ENCODE measurements at regions of chr10 and their contacts with region 1.

Region 1: GRCh38 chr10:94439275-94439861 is 37.0 kb downstream of the TBC1D12 start:
- DNase-seq: no peak
- H3K4me3 ChIP-seq: no peak overlapping the region
- H3K27ac ChIP-seq: no peak overlapping the region
- H3K27me3 ChIP-seq: no peaks in the 10 kb centered on the region
- CTCF ChIP-seq: 0 out of 2 replicates have a peak, but pooled peaks have one; percentile 30

Region 2: GRCh38 chr10:94076321-94076841 is 363.0 kb before region 1 on chr10:
- CTCF ChIA-PET with region 1: interaction called, 25 read pairs
- POLR2A ChIA-PET with region 1: no interaction called
- DNase-seq: peak; percentile 30
- H3K4me3 ChIP-seq: no peak overlapping the region
- H3K27ac ChIP-seq: no peak overlapping the region
- H3K27me3 ChIP-seq: no peaks in the 10 kb centered on the region
- CTCF ChIP-seq: peak; percentile 76

Region 3: DNA sequence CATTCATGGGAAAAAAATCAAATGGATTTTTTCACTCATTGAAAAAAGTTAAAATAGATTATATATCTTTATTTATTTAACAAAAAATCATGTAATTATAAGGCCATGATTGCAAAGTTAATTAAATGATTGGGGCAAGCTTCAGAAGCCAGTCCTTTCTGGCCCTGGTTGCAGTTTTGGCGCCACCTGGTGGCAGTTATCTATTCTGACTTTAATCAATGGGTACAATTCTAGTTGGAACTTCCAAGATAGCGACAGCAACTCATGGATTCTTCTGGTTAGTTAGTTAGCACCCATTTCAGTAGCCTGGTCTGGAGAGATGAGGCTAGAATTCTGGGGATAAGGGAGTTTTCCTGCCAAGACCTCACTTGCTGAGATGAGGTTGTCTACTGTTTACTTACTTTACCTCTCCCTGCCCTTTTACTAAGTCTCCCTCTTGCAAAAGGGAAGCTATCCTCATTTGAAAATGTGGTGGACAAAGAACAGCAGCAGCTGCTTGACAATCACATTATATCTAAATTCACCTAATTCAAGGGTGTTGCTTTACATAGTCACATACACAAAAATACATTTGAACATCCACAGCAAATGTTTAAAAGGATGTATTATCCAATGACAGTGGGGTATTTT is 119.0 kb before region 1 on chr10:
- CTCF ChIA-PET with region 1: interaction called, 68 read pairs
- POLR2A ChIA-PET with region 1: no interaction called
- DNase-seq: no peak
- H3K4me3 ChIP-seq: no peak overlapping the region
- H3K27ac ChIP-seq: no peak overlapping the region
- H3K27me3 ChIP-seq: no peaks in the 10 kb centered on the region
- CTCF ChIP-seq: peak; percentile 79

Region 4: GRCh38 chr10:94353336-94353735 is 86.0 kb before region 1 on chr10:
- CTCF ChIA-PET with region 1: interaction called, 50 read pairs
- POLR2A ChIA-PET with region 1: interaction called, 3 read pairs
- DNase-seq: no peak
- H3K4me3 ChIP-seq: no peak overlapping the region
- H3K27ac ChIP-seq: no peak overlapping the region
- H3K27me3 ChIP-seq: no peaks in the 10 kb centered on the region
- CTCF ChIP-seq: no peak

Region 5: GRCh38 chr10:94402015-94402842 is 37.1 kb before region 1 on chr10 and contains the start of gene TBC1D12:
- CTCF ChIA-PET with region 1: interaction called, 43 read pairs
- POLR2A ChIA-PET with region 1: no interaction called
- DNase-seq: peak; percentile 90
- H3K4me3 ChIP-seq: peak within 1 kb of the TSS; percentile 77
- H3K27ac ChIP-seq: peak within 1 kb of the TSS; percentile 83
- H3K27me3 ChIP-seq: no peaks in the 10 kb centered on the region
- CTCF ChIP-seq: no peak
- polyA plus RNA-seq, gene TBC1D12: 4.1 and 4.7 TPM in 2 replicates

Region 6: GRCh38 chr10:94429049-94429707 is 10.2 kb before region 1 on chr10:
- CTCF ChIA-PET with region 1: interaction called, 65 read pairs
- POLR2A ChIA-PET with region 1: no interaction called
- DNase-seq: no peak
- H3K4me3 ChIP-seq: no peak overlapping the region
- H3K27ac ChIP-seq: no peak overlapping the region
- H3K27me3 ChIP-seq: no peaks in the 10 kb centered on the region
- CTCF ChIP-seq: no peak

Region 7: GRCh38 chr10:94706089-94706488 is 266.7 kb after region 1 on chr10:
- CTCF ChIA-PET with region 1: no interaction called
- POLR2A ChIA-PET with region 1: no interaction called
- DNase-seq: no peak
- H3K4me3 ChIP-seq: no peak overlapping the region
- H3K27ac ChIP-seq: no peak overlapping the region
- H3K27me3 ChIP-seq: no peaks in the 10 kb centered on the region
- CTCF ChIP-seq: no peak

Measured in AG04450 (cell line).